ENCODE measurements at regions of chr11 and their contacts with region 1.

Region 1: DNA sequence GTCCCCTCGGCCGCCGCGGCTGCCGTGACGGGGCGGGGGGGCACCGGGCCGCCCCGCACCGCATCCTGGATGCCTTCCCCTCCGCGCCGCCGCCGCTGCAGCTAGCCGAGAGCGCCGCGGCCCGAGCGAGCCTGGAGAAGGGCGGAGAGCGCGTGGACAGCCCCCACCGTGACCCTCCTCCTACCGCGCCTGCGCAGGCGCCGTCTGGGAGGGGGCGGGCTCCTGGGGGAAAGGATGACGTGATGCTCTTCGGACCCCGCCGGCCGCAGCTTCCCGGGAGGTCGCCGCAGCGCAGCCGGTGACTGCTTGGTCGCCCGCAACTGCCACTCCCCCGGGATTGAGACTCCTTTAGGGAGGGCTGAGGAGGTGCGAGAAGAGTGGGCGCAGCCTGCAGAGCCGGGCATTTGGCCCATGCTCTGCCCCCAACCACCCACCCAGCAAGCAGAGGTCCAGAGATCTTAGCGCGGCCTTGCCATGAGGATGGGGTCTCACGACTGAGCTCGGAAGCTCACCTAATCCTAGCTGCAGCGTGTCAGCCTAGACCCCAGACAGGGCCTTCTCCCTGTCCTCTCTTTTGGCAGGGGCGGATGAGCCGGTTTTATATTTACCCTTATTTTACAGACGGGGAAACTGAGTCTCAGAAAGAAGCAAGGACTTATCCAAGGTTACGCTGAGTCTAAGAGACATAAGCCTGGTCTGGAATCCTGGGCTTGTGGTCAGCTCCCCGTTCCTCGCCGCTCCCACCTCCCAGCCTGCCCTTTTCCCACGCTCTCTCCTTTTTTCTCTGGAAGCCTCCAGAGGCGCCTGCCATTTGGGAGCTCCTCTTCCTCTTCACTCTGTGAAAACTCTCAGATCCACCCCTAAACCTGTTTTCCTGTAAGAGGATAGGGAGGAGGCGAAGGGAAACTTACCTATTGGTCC is at the start of gene DENND5A:
- DNase-seq: peak; percentile 12 to 65 (median 34)
- ATAC-seq: peak; percentile 74
- H3K4me3 ChIP-seq: peak within 1 kb of the TSS; percentile 72
- H3K4me3 Mint-ChIP-seq: peak within 1 kb of the TSS; percentile 87 to 100 (median 97)
- H3K27ac ChIP-seq: peak within 1 kb of the TSS; percentile 72
- H3K27ac Mint-ChIP-seq: peak within 1 kb of the TSS; percentile 89 to 99 (median 95)
- H3K4me1 ChIP-seq: peaks cover 11 to 22% of the 10 kb centered on the region in 2 donors
- H3K4me1 Mint-ChIP-seq: peaks cover 25 to 43% (median 39%) of the 10 kb centered on the region in 7 donors
- H3K27me3 ChIP-seq: no peaks in the 10 kb centered on the region
- H3K27me3 Mint-ChIP-seq: peaks cover 0 to 46% (median 0%) of the 10 kb centered on the region in 5 donors
- total RNA-seq, gene DENND5A: 65.0 to 178 (median 108) TPM

Region 2: DNA sequence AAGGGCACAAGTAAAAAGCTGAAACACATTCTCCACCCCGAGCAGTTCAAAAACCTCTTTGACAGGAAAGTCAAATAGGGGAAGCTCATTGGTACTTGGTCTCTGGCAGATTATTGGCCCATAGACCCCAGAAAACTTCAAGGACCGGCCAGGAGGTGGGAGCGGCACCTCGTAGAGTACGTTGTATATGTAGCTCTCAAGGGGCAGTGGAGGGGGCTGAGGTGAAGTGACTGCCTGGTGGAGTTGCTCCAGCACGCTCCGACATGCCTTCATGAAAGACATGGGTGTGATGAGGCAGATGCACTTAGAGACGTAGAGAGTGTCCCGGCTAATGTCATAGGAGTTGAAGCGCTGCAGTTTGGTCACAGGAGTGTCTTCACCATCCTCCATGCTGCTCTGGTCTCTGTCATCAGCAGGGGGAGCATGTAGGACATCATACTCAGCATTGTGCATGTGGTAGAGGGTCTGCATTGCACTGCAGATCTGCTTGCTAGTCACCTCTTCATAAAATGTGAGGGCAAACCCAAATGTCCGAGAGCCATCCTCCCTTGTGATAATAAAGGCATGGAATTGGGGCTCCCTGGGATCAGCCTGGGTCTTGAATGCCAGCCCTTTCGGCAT is 61.7 kb before region 1 on chr11:
- CTCF ChIA-PET with region 1: interaction called, 4 read pairs
- POLR2A ChIA-PET with region 1: no interaction called
- intact Hi-C with region 1: loop called (anchors 1 to 2 kb)
- DNase-seq: peak in 7 of 9 donors; percentile 13 to 50 (median 24)
- ATAC-seq: peak; percentile 61
- H3K4me3 ChIP-seq: no peak overlapping the region
- H3K4me3 Mint-ChIP-seq: no peak overlapping the region
- H3K27ac ChIP-seq: no peak overlapping the region
- H3K27ac Mint-ChIP-seq: peak overlapping the region in 2 of 9 donors; percentile 9 to 50
- H3K4me1 ChIP-seq: no peaks in the 10 kb centered on the region
- H3K4me1 Mint-ChIP-seq: peaks cover 15 to 55% (median 26%) of the 10 kb centered on the region in 7 donors
- H3K27me3 ChIP-seq: no peaks in the 10 kb centered on the region
- H3K27me3 Mint-ChIP-seq: no peaks in the 10 kb centered on the region

Region 3: GRCh38 chr11:9208726-9209501 is 56.6 kb before region 1 on chr11:
- CTCF ChIA-PET with region 1: interaction called, 4 read pairs
- POLR2A ChIA-PET with region 1: no interaction called
- intact Hi-C with region 1: loop called (anchors 1 to 2 kb)
- DNase-seq: no peak
- ATAC-seq: no peak
- H3K4me3 ChIP-seq: no peak overlapping the region
- H3K4me3 Mint-ChIP-seq: peak overlapping the region in 5 of 10 donors; percentile 0 to 46 (median 14)
- H3K27ac ChIP-seq: no peak overlapping the region
- H3K27ac Mint-ChIP-seq: peak overlapping the region; percentile 1 to 69 (median 22)
- H3K4me1 ChIP-seq: peaks cover 0 to 4% of the 10 kb centered on the region in 2 donors
- H3K4me1 Mint-ChIP-seq: peaks cover 41 to 74% (median 65%) of the 10 kb centered on the region in 7 donors
- H3K27me3 ChIP-seq: no peaks in the 10 kb centered on the region
- H3K27me3 Mint-ChIP-seq: peaks cover 0 to 2% (median 0%) of the 10 kb centered on the region in 5 donors

Region 4: DNA sequence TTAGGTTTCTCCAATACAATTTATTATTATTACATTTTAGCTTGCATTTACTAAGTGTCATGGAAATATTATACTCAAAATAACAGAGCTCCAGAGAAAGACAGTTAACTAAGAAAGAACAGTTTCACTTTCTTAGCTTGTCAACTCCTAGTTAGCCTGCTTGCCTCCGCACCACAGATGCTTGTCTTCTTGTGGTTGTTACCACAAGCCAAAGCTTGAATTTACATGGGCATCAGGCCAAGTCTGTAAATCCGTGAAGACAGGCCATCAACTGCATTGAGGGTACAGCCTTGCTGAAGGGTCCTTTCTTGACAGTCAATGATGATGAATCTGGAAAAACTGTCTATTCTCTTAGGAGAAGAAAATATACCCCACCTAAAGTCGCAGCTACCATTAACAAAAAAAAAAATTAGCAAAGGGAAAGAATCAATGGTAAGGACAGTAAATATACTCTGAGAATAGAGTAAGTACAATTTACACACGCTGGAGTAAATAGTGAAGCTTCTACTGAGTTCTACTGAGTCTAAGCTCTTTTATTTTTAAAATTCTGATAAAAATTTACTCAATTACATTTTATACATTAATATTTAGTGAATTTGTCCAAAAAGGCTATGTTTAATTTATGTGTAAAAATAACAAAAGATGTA is 15.3 kb after region 1 on chr11:
- CTCF ChIA-PET with region 1: interaction called, 5 read pairs
- POLR2A ChIA-PET with region 1: interaction called, 7 read pairs
- intact Hi-C with region 1: loop called (anchors 1 kb)
- DNase-seq: peak in 8 of 9 donors; percentile 59 to 80 (median 72)
- ATAC-seq: peak; percentile 95
- H3K4me3 ChIP-seq: peak overlapping the region; percentile 37
- H3K4me3 Mint-ChIP-seq: peak overlapping the region; percentile 35 to 79 (median 77)
- H3K27ac ChIP-seq: peak overlapping the region; percentile 55
- H3K27ac Mint-ChIP-seq: peak overlapping the region; percentile 72 to 94 (median 82)
- H3K4me1 ChIP-seq: peaks cover 11 to 14% of the 10 kb centered on the region in 2 donors
- H3K4me1 Mint-ChIP-seq: peaks cover 11 to 36% (median 17%) of the 10 kb centered on the region in 7 donors
- H3K27me3 ChIP-seq: no peaks in the 10 kb centered on the region
- H3K27me3 Mint-ChIP-seq: no peaks in the 10 kb centered on the region

Region 5: DNA sequence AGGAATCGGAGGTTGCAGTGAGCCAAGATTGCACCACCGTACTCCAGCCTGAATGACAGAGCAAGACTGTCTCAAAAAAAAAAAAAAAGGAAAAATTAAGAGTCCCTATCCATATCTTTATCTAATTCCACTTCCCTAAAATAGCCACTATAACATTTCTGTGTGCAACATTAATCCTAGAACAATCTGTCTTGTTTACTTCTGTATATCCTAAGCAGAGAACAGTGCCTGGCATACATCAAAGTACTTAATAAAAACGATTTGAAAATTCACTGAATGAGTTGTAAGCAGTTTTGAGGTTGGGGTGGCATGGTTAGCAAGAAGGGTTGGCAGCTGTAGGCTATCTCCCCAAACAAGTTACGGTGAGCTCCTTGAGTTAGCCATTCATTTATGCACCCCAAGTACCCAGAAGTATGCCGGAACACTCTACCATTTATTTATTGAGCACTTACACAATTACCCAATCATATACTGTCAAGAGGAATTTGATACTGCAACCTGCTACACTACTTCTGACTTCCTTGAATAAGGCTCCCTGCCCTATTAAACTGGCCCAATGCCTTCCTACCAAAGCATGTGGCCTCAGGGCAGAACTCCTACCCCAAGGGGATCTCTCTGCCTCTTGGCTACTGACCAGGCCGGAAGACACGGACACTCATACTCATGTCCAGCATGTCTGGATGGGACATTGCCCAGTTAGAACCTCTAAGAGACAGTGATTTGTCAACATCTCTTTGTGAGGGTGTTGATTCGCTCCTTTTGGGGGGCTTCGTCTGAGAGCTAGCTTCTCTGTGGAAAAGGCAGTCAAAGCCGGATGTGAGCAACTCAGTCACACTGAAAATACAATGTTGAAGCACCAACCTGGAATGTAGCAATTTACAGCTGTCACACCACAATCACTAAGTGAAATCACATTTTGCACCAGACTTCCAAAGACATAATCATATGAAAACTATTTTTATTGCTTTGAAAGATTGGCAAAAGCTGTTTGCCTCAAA is 65.2 kb after region 1 on chr11:
- CTCF ChIA-PET with region 1: no interaction called
- POLR2A ChIA-PET with region 1: no interaction called
- intact Hi-C with region 1: no loop called
- DNase-seq: no peak
- ATAC-seq: no peak
- H3K4me3 ChIP-seq: no peak overlapping the region
- H3K4me3 Mint-ChIP-seq: no peak overlapping the region
- H3K27ac ChIP-seq: no peak overlapping the region
- H3K27ac Mint-ChIP-seq: peak overlapping the region in 2 of 9 donors; percentile 18 to 69
- H3K4me1 ChIP-seq: no peaks in the 10 kb centered on the region
- H3K4me1 Mint-ChIP-seq: peaks cover 0 to 3% (median 0%) of the 10 kb centered on the region in 7 donors
- H3K27me3 ChIP-seq: no peaks in the 10 kb centered on the region
- H3K27me3 Mint-ChIP-seq: no peaks in the 10 kb centered on the region

Region 6: GRCh38 chr11:9363954-9364912 is 98.8 kb after region 1 on chr11:
- CTCF ChIA-PET with region 1: no interaction called
- POLR2A ChIA-PET with region 1: no interaction called
- intact Hi-C with region 1: loop called in 1 of 2 experiments (anchors 5 kb)
- DNase-seq: peak; percentile 38 to 82 (median 66)
- ATAC-seq: peak; percentile 95
- H3K4me3 ChIP-seq: peak overlapping the region; percentile 85
- H3K4me3 Mint-ChIP-seq: peak overlapping the region; percentile 78 to 89 (median 84)
- H3K27ac ChIP-seq: peak overlapping the region; percentile 73
- H3K27ac Mint-ChIP-seq: peak overlapping the region; percentile 78 to 94 (median 90)
- H3K4me1 ChIP-seq: peaks cover 2 to 5% of the 10 kb centered on the region in 2 donors
- H3K4me1 Mint-ChIP-seq: peaks cover 0 to 30% (median 14%) of the 10 kb centered on the region in 7 donors
- H3K27me3 ChIP-seq: no peaks in the 10 kb centered on the region
- H3K27me3 Mint-ChIP-seq: no peaks in the 10 kb centered on the region

Region 7: GRCh38 chr11:10293423-10294289 is 1028.2 kb after region 1 on chr11 and contains the start of gene SBF2:
- CTCF ChIA-PET with region 1: no interaction called
- POLR2A ChIA-PET with region 1: no interaction called
- intact Hi-C with region 1: loop called in 1 of 2 experiments (anchors 5 kb)
- DNase-seq: peak; percentile 62 to 83 (median 77)
- ATAC-seq: peak; percentile 71
- H3K4me3 ChIP-seq: peak within 1 kb of the TSS; percentile 73
- H3K4me3 Mint-ChIP-seq: peak within 1 kb of the TSS; percentile 82 to 92 (median 88)
- H3K27ac ChIP-seq: peak within 1 kb of the TSS; percentile 48
- H3K27ac Mint-ChIP-seq: peak within 1 kb of the TSS in 8 of 9 donors; percentile 10 to 83 (median 59)
- H3K4me1 ChIP-seq: peaks cover 16 to 29% of the 10 kb centered on the region in 2 donors
- H3K4me1 Mint-ChIP-seq: peaks cover 28 to 44% (median 37%) of the 10 kb centered on the region in 7 donors
- H3K27me3 ChIP-seq: peaks cover 0 to 2% of the 10 kb centered on the region in 2 donors
- H3K27me3 Mint-ChIP-seq: peaks cover 15 to 55% (median 26%) of the 10 kb centered on the region in 5 donors
- total RNA-seq, gene SBF2: 8.5 to 35.2 (median 16.1) TPM